Panc1 (cell line): ENCODE measurements at regions of chr2 and their contacts with region 1.

Region 1: DNA sequence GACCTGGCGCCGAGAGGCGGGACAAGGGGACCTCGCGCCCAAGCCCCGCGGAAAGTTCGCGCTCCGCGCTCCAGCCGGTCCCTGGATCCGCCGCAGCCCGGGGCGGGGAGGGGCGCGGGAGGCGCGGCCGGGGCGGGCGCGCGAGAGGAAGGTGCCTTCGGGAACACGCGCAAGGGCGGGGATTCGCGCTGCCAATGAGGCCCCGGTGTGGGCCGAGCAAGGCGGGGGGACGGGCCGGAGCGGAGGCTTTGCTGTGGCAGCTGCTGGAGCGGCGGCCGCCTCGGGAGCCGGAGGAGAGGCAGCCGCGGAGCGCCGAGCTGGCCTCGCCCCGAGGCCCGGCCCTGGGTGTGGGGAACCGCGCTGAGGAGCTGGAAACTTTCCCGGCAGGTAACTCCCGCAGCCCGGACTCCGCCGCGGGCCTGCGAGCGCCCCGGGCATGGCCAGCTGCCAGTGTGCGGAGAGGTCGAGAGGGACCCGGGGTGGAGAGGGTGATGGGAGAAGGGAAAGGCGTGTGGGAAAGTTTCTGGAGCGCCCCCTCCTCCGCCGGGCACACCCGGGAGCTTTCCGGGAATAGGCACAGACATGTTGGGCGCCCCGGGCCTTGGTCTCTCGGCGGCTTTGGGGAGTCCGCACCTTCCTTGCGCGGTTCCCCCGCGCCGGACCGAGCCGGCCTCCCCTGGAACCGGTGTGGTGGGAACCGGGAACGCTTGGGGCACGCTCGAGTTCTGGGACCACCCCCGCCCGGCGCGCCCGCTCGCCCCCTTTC is at the start of gene TANC1:
- DNase-seq: no peak
- ATAC-seq: peak; percentile 94
- H3K4me3 ChIP-seq: peak within 1 kb of the TSS; percentile 91 to 97
- H3K27ac ChIP-seq: peak within 1 kb of the TSS; percentile 96
- H3K4me1 ChIP-seq: peaks cover 48% of the 10 kb centered on the region
- H3K27me3 ChIP-seq: no peaks in the 10 kb centered on the region
- CTCF ChIP-seq: peak; percentile 7; the same call in 1 of the 2 replicates
- total RNA-seq, gene TANC1: 44.3 TPM

Region 2: GRCh38 chr2:158903711-158904443 is 64.7 kb before region 1 on chr2:
- CTCF ChIA-PET with region 1: no interaction called
- POLR2A ChIA-PET with region 1: no interaction called
- in situ Hi-C with region 1: no loop called
- intact Hi-C with region 1: loop called (anchors 5 kb)
- DNase-seq: no peak
- ATAC-seq: no peak
- H3K4me3 ChIP-seq: no peak overlapping the region
- H3K27ac ChIP-seq: no peak overlapping the region
- H3K4me1 ChIP-seq: peaks cover 3% of the 10 kb centered on the region; the same call in 1 of the 2 replicates
- H3K27me3 ChIP-seq: no peaks in the 10 kb centered on the region
- CTCF ChIP-seq: no peak

Region 3: DNA sequence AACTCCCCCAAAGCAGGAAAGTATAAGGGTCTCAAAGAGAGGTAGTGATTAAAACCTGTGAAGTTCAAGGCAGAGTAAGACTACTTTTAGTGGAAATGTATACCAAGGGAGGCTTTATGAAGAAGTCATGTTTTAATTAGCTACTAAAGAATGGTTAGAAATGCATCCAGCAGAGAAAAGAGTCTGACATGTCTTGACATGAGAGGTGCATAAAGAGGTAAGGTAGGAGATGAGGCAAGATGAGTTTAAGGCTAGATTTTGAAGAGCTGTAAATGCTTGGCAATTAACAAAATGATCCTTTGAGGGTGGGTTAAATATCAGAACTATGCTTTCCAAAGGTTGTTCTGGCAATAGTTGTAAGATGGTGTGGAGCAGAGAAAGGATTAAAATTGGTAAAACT is 406.7 kb after region 1 on chr2:
- CTCF ChIA-PET with region 1: no interaction called
- POLR2A ChIA-PET with region 1: no interaction called
- in situ Hi-C with region 1: no loop called
- intact Hi-C with region 1: no loop called
- DNase-seq: no peak
- ATAC-seq: no peak
- H3K4me3 ChIP-seq: no peak overlapping the region
- H3K27ac ChIP-seq: no peak overlapping the region
- H3K4me1 ChIP-seq: no peaks in the 10 kb centered on the region
- H3K27me3 ChIP-seq: no peaks in the 10 kb centered on the region
- CTCF ChIP-seq: no peak